Spleen (tissue), 13 donors: ENCODE measurements at regions of chr5 and their contacts with region 1.

Region 1: DNA sequence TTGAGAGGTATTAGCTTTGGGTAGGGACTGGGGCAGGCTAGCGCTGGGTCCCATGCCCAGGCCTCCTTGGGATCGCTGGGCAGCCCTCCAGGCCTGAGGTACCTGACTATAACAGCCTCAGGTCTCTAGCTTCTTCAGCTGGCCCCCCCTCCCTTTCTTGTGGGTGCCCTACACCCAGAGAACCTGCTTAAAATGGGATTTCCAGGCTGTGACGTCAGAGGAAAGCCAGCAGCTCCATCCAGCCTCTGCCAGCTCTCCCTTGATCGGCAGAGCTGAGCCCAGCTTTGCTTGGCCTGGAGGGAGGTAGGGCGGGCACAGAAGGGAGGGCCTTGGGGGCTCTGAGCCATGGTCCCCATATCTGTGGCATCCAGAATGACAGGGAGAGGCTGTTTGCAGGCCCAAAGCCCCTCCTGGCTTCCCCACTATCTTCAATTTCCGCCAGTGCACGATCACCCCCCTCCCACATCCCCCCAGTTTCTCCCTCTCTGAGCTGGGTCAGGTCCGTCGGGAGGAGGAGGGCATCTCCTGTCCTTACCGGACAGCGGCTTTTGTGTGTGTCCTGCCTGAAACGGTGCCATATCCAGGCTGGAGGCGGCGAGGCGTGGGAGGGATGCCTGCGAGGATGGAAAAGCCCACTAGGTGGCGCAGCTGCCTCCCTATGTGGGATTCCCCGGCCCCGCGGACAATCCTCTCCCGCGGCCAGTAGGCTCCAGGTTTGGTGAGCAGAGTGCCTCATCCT is 10.8 kb downstream of the REEP2 start:
- DNase-seq: peak; percentile 95
- H3K4me3 ChIP-seq: no peak overlapping the region
- H3K27ac ChIP-seq: no peak overlapping the region
- H3K4me1 ChIP-seq: peaks cover 0 to 11% (median 7%) of the 10 kb centered on the region in 6 donors
- H3K27me3 ChIP-seq: no peaks in the 10 kb centered on the region
- CTCF ChIP-seq: peak; percentile 94 to 99 (median 97)
- POLR2A ChIP-seq: no peak

Region 2: GRCh38 chr5:138503487-138504270 is 54.0 kb after region 1 on chr5:
- intact Hi-C with region 1: loop called (anchors 2 kb)
- DNase-seq: no peak
- H3K4me3 ChIP-seq: no peak overlapping the region
- H3K27ac ChIP-seq: no peak overlapping the region
- H3K4me1 ChIP-seq: no peaks in the 10 kb centered on the region
- H3K27me3 ChIP-seq: no peaks in the 10 kb centered on the region
- CTCF ChIP-seq: peak; percentile 64 to 85 (median 77)
- POLR2A ChIP-seq: no peak